Cardiac septum (tissue), 1 donor: ENCODE measurements at regions of chr12 and their contacts with region 1.

Region 1: GRCh38 chr12:110698171-110698902 is 9.4 kb upstream of the HVCN1 start:
- DNase-seq: peak; percentile 92

Region 2: GRCh38 chr12:110513842-110514241 is 184.5 kb before region 1 on chr12:
- intact Hi-C with region 1: loop called (anchors 5 kb)
- DNase-seq: no peak

Region 3: DNA sequence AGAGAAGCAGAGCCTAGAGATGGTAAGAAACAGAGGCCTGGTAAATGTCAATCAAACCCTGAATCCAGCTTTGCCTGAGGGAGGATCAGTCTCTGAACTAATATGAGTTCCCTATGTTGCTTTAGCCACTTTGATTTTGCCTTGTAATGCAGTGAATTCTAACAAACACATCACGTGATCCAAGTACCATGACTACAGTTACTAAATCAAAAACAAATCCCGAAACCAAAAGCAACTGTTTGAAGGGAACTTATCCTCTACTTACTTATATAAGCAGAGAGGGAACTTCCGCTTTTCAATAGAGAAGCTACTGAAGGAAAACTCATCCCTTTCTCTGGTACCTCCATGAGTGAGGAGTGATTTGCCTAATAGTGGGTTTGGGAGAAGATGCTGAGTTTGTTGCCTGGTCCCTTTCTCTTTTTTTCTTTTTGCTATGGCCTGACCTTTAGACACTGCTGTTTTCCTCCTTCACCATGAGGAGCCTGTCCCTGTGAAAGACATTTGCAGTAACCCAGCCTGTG is 107.5 kb before region 1 on chr12:
- intact Hi-C with region 1: no loop called
- DNase-seq: no peak

Region 4: GRCh38 chr12:110742718-110743570 is 44.6 kb after region 1 on chr12 and contains the start of gene PPP1CC:
- intact Hi-C with region 1: loop called (anchors 5 kb)
- DNase-seq: peak; percentile 97
- total RNA-seq, gene PPP1CC: 102 TPM

Region 5: DNA sequence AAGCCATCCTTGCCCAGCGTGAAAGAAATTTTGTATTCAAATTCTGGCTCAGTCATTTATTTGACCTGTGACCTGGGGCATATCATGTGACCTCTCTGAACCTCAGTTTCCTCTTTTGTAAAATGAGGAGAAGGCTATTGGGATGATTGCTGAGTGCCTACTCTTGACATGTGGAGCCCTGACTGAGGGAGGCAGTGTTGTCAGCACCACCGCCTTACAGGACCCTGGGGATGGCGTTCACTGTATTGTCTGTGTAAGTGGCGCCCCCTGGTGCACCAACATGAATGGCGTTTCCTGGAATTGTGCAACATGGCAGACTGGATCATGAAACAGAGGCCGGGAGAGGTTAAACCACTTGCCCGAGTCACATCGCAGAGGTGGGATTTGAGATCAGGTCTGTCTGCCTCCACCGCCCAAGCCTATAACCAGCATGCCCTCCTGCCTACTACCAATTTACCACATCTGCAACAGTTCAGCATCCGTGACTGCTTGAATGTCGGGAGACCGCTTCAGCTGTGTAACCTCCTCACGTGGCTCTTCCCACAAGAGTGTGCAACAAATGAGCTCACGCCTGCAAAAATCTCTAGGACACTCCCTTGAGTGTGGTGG is 128.4 kb after region 1 on chr12:
- intact Hi-C with region 1: loop called (anchors 2 kb)
- DNase-seq: peak; percentile 85